SK-N-SH (cell line): ENCODE measurements at regions of chr7 and their contacts with region 1.

Region 1: DNA sequence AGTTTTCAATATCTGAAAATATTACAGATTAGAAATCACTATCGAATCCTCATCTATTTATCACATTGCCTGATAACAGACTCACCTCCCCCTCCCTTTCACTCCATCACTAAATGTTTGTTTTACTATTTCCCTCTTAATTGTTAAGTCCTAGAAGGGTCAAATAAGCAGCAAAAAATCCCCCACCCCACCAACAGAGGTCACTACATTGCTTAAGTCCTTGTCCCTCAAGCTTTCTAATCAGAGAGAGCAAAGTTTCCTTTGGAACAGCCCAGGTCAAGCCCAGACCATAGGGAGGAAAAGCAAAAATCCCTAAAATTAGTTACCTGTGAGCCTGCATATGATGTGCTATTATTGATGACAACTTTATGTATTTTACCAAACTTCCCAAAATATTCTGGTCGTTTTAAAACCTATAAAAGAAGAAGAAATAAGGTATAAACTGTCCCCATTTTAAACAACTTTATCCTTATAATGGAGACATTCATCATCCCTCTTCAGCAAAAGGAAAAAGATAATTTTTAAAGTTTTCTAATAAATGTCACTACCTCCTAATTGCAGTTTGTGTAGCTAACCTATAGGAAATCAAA is 95.0 kb downstream of the CNOT4 start:
- DNase-seq: peak; percentile 19
- H3K4me3 ChIP-seq: no peak overlapping the region
- H3K27ac ChIP-seq: no peak overlapping the region
- H3K4me1 ChIP-seq: no peaks in the 10 kb centered on the region; a peak in 1 of 4 replicates
- H3K27me3 ChIP-seq: no peaks in the 10 kb centered on the region
- CTCF ChIP-seq: peak; percentile 63
- EP300 ChIP-seq: no peak
- RAD21 ChIP-seq: peak; percentile 69

Region 2: DNA sequence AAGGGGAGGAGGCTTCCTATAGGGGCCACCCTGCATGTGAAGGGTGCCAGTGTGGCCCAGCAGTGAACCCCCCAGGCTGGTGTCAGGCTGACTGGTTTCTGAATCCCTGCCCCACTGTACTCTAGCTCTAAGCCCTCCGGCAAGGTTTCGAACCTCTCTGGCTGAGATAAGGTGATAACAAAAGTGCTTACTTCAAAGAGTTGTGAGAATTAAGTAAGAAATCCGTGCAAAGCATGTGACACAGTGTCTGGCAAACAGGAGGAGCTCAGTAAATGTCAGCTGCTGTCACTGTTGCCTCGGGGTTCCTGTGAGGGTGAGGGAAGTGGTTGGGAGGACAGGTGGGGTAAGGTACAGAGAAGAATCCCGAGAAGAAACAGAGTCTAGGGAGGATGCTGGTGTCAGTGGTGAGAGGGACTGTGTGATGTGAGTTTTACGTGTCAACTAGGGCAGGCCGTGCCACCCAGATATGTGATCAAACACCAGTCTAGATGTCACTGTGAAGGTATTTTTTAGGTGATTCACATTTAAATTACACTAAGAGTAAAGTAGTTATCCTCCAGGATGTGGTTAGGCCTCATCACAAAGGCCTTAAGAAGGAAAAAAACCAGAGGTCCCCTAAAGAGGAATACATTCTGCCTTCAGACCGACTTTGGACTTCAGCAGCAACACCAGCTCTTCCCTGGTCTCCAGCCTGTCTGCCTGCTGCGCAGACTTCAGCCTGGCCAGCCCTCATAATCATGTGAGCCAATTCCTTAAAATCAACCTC is 703.9 kb before region 1 on chr7:
- CTCF ChIA-PET with region 1: no interaction called
- POLR2A ChIA-PET with region 1: no interaction called
- DNase-seq: no peak
- H3K4me3 ChIP-seq: no peak overlapping the region
- H3K27ac ChIP-seq: no peak overlapping the region; a peak in 1 of 4 replicates
- H3K4me1 ChIP-seq: peaks cover 4 to 7% of the 10 kb centered on the region in 2 experiments; a peak in 1 of 4 replicates
- H3K27me3 ChIP-seq: no peaks in the 10 kb centered on the region
- CTCF ChIP-seq: no peak
- EP300 ChIP-seq: no peak
- RAD21 ChIP-seq: no peak

Region 3: DNA sequence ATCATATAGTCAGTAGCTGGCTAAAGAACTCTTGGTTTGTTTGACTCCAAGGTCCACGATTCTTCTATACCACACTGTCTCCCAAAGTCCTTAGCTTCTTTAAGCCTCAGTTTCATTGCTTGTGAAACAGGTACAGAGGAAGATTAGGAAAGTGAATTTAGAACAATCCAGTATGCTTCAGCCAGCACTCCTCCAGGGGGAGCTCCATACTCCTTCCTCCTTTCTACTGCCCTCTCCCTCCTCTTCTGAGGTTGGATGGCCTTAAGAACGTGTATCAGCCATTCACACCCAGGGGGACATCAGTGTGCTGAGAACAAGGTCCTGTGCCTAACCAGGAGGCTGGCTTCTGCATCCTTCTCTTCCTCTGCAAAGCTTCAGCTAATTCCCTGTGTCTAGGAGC is 690.3 kb before region 1 on chr7:
- CTCF ChIA-PET with region 1: no interaction called
- POLR2A ChIA-PET with region 1: no interaction called
- DNase-seq: no peak
- H3K4me3 ChIP-seq: no peak overlapping the region
- H3K27ac ChIP-seq: no peak overlapping the region
- H3K4me1 ChIP-seq: peaks cover 5 to 9% of the 10 kb centered on the region in 2 experiments
- H3K27me3 ChIP-seq: no peaks in the 10 kb centered on the region
- CTCF ChIP-seq: peak; percentile 61
- EP300 ChIP-seq: no peak
- RAD21 ChIP-seq: peak; percentile 58

Region 4: DNA sequence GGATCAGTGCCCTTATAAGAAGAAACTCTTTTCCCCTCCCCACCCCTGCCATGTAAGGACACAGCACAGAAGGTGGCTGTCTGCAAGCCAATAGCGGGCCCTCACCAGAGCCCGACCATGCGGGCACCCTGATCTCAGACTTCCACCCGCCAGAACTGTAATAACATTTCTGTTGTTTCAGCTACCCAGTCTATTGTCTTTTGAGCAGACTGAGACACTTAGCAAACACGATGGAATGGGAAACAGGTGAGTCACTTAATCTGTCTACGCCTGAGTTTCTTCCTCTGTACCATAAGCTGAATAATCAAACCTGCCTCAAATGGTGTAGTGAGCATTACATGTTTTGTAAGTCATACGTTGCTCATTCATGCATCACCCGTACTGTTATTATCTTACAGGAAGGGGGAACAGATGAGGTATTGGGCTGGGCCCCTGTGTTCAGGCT is 123.1 kb before region 1 on chr7:
- CTCF ChIA-PET with region 1: no interaction called
- POLR2A ChIA-PET with region 1: no interaction called
- DNase-seq: no peak
- H3K4me3 ChIP-seq: no peak overlapping the region
- H3K27ac ChIP-seq: no peak overlapping the region; a peak in 1 of 4 replicates
- H3K4me1 ChIP-seq: peaks cover 0 to 4% of the 10 kb centered on the region in 2 experiments; a peak in 1 of 4 replicates
- H3K27me3 ChIP-seq: no peaks in the 10 kb centered on the region
- CTCF ChIP-seq: no peak
- EP300 ChIP-seq: no peak
- RAD21 ChIP-seq: no peak

Region 5: GRCh38 chr7:135342887-135343286 is 72.1 kb before region 1 on chr7:
- CTCF ChIA-PET with region 1: no interaction called
- POLR2A ChIA-PET with region 1: no interaction called
- DNase-seq: peak; percentile 71
- H3K4me3 ChIP-seq: 0 out of 4 replicates have a peak overlapping the region, but pooled peaks have one; percentile 4 to 20
- H3K27ac ChIP-seq: no peak overlapping the region
- H3K4me1 ChIP-seq: peaks cover 0 to 16% of the 10 kb centered on the region in 2 experiments; a peak in 2 of 4 replicates
- H3K27me3 ChIP-seq: no peaks in the 10 kb centered on the region; the same call in 1 of the 2 replicates
- CTCF ChIP-seq: no peak
- EP300 ChIP-seq: no peak; a peak in 1 of 4 replicates
- RAD21 ChIP-seq: no peak

Region 6: DNA sequence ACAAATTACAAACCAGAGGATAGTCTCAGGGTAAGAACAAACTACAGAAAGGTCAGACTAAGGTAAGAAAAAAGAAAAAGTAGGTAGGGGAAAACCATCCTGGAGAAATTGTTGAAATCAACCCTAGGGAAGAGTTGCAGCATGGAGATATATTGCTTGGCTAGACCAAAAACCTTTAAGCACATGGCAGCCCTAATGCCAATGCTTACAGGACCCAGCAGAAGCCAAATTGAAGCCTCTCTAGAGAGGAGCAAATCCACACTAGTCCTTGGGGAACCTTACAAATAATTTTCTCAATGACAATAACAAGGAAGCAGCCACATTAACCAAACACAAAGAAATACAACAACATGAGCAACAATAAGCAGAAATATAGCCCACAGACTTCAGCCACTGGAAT is 13.1 kb after region 1 on chr7:
- CTCF ChIA-PET with region 1: interaction called, 11 read pairs
- POLR2A ChIA-PET with region 1: no interaction called
- DNase-seq: no peak
- H3K4me3 ChIP-seq: no peak overlapping the region
- H3K27ac ChIP-seq: no peak overlapping the region
- H3K4me1 ChIP-seq: peaks cover 0 to 4% of the 10 kb centered on the region in 2 experiments; a peak in 1 of 4 replicates
- H3K27me3 ChIP-seq: no peaks in the 10 kb centered on the region
- CTCF ChIP-seq: no peak
- EP300 ChIP-seq: no peak
- RAD21 ChIP-seq: no peak